Activated CD4-positive, alpha-beta memory T cell treated with anti-CD3 and anti-CD28 coated beads for 36 hours (primary cell): ENCODE measurements at regions of chr1 and their contacts with region 1.

Region 1: DNA sequence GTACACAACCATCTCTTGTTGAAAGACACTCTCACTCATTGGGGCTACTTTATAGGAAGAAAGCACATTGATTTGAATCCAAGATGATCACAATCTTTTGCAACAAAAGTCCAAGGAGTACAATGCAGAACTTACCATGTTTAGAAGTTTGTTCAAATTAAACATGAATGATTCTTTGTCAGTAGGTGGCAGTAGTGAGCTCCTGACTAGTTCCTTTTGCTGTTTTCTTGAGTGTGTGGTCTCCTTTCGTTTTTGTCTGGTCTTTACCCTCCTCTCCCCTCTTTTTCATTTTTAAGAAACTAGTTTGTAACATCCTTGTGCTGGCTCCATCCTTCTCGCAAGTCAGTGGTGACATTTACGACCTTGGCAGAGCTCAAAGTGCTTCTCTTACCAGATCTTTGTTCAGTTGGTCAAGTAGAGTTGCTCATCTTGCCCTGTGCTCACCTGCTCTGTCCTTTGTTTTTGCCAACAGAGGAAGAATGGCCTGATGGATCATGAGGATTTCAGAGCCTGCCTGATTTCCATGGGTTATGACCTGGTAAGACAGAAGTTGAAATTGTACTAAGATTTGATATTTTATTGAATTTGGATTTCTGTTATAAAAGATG is 35.7 kb upstream of the MTR start:
- DNase-seq: no peak
- H3K4me3 Mint-ChIP-seq: no peak overlapping the region
- H3K27ac Mint-ChIP-seq: no peak overlapping the region
- H3K4me1 Mint-ChIP-seq: peaks cover 1% of the 10 kb centered on the region
- H3K27me3 Mint-ChIP-seq: no peaks in the 10 kb centered on the region

Region 2: GRCh38 chr1:236673289-236673919 is 86.0 kb before region 1 on chr1:
- CTCF ChIA-PET with region 1: no interaction called
- POLR2A ChIA-PET with region 1: no interaction called
- intact Hi-C with region 1: no loop called
- DNase-seq: no peak
- H3K4me3 Mint-ChIP-seq: no peak overlapping the region
- H3K27ac Mint-ChIP-seq: no peak overlapping the region
- H3K4me1 Mint-ChIP-seq: no peaks in the 10 kb centered on the region
- H3K27me3 Mint-ChIP-seq: peaks cover 23% of the 10 kb centered on the region

Region 3: GRCh38 chr1:236689713-236690569 is 69.4 kb before region 1 on chr1:
- CTCF ChIA-PET with region 1: no interaction called
- POLR2A ChIA-PET with region 1: no interaction called
- intact Hi-C with region 1: no loop called
- DNase-seq: no peak
- H3K4me3 Mint-ChIP-seq: no peak overlapping the region
- H3K27ac Mint-ChIP-seq: no peak overlapping the region
- H3K4me1 Mint-ChIP-seq: peaks cover 15% of the 10 kb centered on the region
- H3K27me3 Mint-ChIP-seq: peaks cover 51% of the 10 kb centered on the region

Region 4: DNA sequence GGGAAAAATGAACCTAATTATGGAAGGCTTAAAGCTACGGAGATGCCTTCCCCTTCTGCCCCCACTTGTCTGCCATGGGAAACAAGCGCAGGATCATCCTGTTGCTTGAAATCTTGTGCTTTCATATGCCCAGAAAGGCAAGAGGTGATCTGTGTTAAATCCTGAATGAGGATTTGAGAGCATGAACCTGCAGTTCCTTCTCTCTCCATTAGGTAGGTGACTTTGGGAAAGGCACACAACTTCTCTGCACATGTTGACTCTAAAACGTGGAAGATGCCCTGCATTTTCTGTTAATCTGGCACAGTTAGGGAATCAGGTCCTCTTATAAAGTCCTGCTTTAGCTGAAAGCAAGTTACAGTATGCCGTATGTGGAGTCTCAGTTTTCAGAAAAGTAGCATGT is 10.9 kb before region 1 on chr1:
- CTCF ChIA-PET with region 1: interaction called, 24 read pairs
- POLR2A ChIA-PET with region 1: no interaction called
- intact Hi-C with region 1: no loop called
- DNase-seq: no peak
- H3K4me3 Mint-ChIP-seq: no peak overlapping the region
- H3K27ac Mint-ChIP-seq: no peak overlapping the region
- H3K4me1 Mint-ChIP-seq: no peaks in the 10 kb centered on the region
- H3K27me3 Mint-ChIP-seq: peaks cover 14% of the 10 kb centered on the region

Region 5: GRCh38 chr1:236786453-236786852 is 27.1 kb after region 1 on chr1:
- CTCF ChIA-PET with region 1: interaction called, 13 read pairs
- POLR2A ChIA-PET with region 1: no interaction called
- intact Hi-C with region 1: no loop called
- DNase-seq: no peak
- H3K4me3 Mint-ChIP-seq: no peak overlapping the region
- H3K27ac Mint-ChIP-seq: no peak overlapping the region
- H3K4me1 Mint-ChIP-seq: no peaks in the 10 kb centered on the region
- H3K27me3 Mint-ChIP-seq: no peaks in the 10 kb centered on the region

Region 6: DNA sequence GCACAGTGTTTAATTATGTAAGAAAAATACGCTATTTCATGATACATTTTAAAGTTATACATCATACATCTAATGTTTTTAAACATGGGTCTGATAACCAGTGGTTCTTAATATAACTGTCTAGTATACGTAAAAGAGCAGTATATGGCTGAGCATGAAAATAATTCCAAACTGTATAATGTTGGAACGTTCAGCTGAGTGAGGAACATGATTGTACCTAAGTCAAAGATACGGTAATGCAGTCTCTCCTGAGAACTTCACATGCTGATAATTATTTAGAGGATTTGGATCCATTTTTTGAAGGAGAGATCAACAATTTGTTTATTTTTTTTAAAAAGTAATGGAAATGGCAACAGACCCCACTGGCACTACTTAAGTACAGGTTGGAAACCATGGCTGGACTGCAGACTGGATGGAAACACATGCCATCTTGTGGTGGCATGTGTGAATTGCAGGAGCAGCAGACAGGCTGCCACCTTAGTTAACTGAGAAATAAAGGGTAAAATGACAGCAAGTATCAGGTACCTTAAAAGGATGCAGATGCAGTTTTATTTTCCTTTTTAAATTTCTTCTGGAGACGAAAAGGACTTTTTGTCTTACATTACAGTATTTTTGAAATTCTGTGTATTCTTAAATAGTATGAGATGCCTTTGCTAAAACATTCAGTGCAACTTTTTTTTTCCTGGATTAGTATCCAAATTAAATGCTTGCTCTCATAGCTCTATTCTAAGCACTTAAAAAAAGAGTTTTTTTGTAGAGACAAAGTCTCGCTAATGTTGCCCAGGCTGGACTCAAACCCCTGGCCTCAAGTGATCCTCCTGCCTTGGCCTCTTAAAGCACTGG is 109.5 kb after region 1 on chr1:
- CTCF ChIA-PET with region 1: interaction called, 19 read pairs
- POLR2A ChIA-PET with region 1: no interaction called
- intact Hi-C with region 1: loop called (anchors 1 kb)
- DNase-seq: peak; percentile 57
- H3K4me3 Mint-ChIP-seq: no peak overlapping the region
- H3K27ac Mint-ChIP-seq: no peak overlapping the region
- H3K4me1 Mint-ChIP-seq: no peaks in the 10 kb centered on the region
- H3K27me3 Mint-ChIP-seq: no peaks in the 10 kb centered on the region

Region 7: GRCh38 chr1:237562242-237562823 is 803.0 kb after region 1 on chr1:
- CTCF ChIA-PET with region 1: interaction called, 13 read pairs
- POLR2A ChIA-PET with region 1: no interaction called
- intact Hi-C with region 1: no loop called
- DNase-seq: no peak
- H3K4me3 Mint-ChIP-seq: no peak overlapping the region
- H3K27ac Mint-ChIP-seq: no peak overlapping the region
- H3K4me1 Mint-ChIP-seq: no peaks in the 10 kb centered on the region
- H3K27me3 Mint-ChIP-seq: peaks cover 17% of the 10 kb centered on the region